ENCODE measurements at regions of chr20 and their contacts with region 1.

Region 1: GRCh38 chr20:62953839-62954703 is 1.6 kb downstream of the SLC17A9 start:
- DNase-seq: peak; percentile 49 to 84 (median 74)
- ATAC-seq: peak; percentile 91
- H3K4me3 ChIP-seq: peak overlapping the region; percentile 65
- H3K4me3 Mint-ChIP-seq: peak overlapping the region; percentile 81 to 91 (median 84)
- H3K27ac ChIP-seq: peak overlapping the region; percentile 66
- H3K27ac Mint-ChIP-seq: peak overlapping the region; percentile 89 to 98 (median 93)
- H3K4me1 ChIP-seq: peaks cover 13 to 32% of the 10 kb centered on the region in 2 donors
- H3K4me1 Mint-ChIP-seq: peaks cover 11 to 47% (median 28%) of the 10 kb centered on the region in 7 donors
- H3K27me3 ChIP-seq: no peaks in the 10 kb centered on the region
- H3K27me3 Mint-ChIP-seq: no peaks in the 10 kb centered on the region

Region 2: DNA sequence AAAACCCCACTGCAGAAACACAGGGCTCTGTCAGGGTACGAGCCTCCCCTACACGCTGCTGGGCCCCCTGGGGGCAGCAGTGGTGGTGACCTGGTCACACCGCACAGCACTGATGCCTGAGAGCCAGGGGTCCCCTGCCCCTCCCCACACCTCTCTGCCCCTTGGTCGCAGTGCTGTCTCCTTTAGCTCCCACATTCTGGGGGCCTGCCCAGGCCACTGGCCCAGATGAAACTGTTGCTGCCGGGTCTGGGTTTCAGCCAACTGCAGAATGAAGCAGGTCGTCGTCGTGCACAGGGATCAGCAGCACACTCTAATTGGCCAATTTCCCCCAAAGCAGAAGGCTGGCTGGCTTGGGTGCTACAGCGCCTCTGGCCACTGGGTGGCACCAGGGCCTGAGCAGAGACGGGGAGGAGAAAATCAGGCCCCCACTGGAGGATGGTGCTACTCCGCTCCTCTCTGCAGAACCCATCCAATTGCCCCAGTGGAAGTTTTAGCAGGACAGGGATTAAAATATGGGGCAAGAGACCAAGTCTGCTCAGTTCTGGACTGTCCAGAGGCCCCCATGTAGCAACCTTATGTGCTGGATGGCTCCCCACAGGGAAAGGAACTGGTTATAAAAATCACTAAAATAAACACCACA is 53.9 kb before region 1 on chr20:
- CTCF ChIA-PET with region 1: interaction called, 4 read pairs
- POLR2A ChIA-PET with region 1: interaction called, 9 read pairs
- intact Hi-C with region 1: loop called in 1 of 2 experiments (anchors 1 kb)
- DNase-seq: peak; percentile 60 to 82 (median 78)
- ATAC-seq: peak; percentile 97
- H3K4me3 ChIP-seq: no peak overlapping the region
- H3K4me3 Mint-ChIP-seq: peak overlapping the region; percentile 54 to 81 (median 69)
- H3K27ac ChIP-seq: peak overlapping the region; percentile 60
- H3K27ac Mint-ChIP-seq: peak overlapping the region; percentile 75 to 95 (median 90)
- H3K4me1 ChIP-seq: peaks cover 13 to 22% of the 10 kb centered on the region in 2 donors
- H3K4me1 Mint-ChIP-seq: peaks cover 23 to 42% (median 34%) of the 10 kb centered on the region in 7 donors
- H3K27me3 ChIP-seq: no peaks in the 10 kb centered on the region
- H3K27me3 Mint-ChIP-seq: no peaks in the 10 kb centered on the region

Region 3: GRCh38 chr20:62914970-62915457 is 39.1 kb before region 1 on chr20:
- CTCF ChIA-PET with region 1: interaction called, 5 read pairs
- POLR2A ChIA-PET with region 1: interaction called, 12 read pairs
- intact Hi-C with region 1: loop called in 1 of 2 experiments (anchors 5 kb)
- DNase-seq: peak in 3 of 9 donors; percentile 32 to 41 (median 37)
- ATAC-seq: peak; percentile 48
- H3K4me3 ChIP-seq: no peak overlapping the region
- H3K4me3 Mint-ChIP-seq: peak overlapping the region; percentile 15 to 90 (median 72)
- H3K27ac ChIP-seq: peak overlapping the region; percentile 57
- H3K27ac Mint-ChIP-seq: peak overlapping the region; percentile 51 to 91 (median 82)
- H3K4me1 ChIP-seq: peaks cover 53 to 55% of the 10 kb centered on the region in 2 donors
- H3K4me1 Mint-ChIP-seq: peaks cover 54 to 90% (median 82%) of the 10 kb centered on the region in 7 donors
- H3K27me3 ChIP-seq: no peaks in the 10 kb centered on the region
- H3K27me3 Mint-ChIP-seq: no peaks in the 10 kb centered on the region

Region 4: GRCh38 chr20:62926239-62927104 is 27.6 kb before region 1 on chr20 and contains the start of gene DIDO1:
- CTCF ChIA-PET with region 1: interaction called, 3 read pairs
- POLR2A ChIA-PET with region 1: interaction called, 30 read pairs
- intact Hi-C with region 1: loop called in 1 of 2 experiments (anchors 1 kb)
- DNase-seq: peak; percentile 81 to 93 (median 89)
- ATAC-seq: peak; percentile 92
- H3K4me3 ChIP-seq: peak within 1 kb of the TSS; percentile 84
- H3K4me3 Mint-ChIP-seq: peak within 1 kb of the TSS; percentile 94 to 99 (median 96)
- H3K27ac ChIP-seq: peak within 1 kb of the TSS; percentile 95
- H3K27ac Mint-ChIP-seq: peak within 1 kb of the TSS; percentile 90 to 96 (median 94)
- H3K4me1 ChIP-seq: peaks cover 53 to 57% of the 10 kb centered on the region in 2 donors
- H3K4me1 Mint-ChIP-seq: peaks cover 48 to 74% (median 69%) of the 10 kb centered on the region in 7 donors
- H3K27me3 ChIP-seq: no peaks in the 10 kb centered on the region
- H3K27me3 Mint-ChIP-seq: no peaks in the 10 kb centered on the region
- total RNA-seq, gene DIDO1: 66.1 to 139 (median 77.4) TPM

Region 5: DNA sequence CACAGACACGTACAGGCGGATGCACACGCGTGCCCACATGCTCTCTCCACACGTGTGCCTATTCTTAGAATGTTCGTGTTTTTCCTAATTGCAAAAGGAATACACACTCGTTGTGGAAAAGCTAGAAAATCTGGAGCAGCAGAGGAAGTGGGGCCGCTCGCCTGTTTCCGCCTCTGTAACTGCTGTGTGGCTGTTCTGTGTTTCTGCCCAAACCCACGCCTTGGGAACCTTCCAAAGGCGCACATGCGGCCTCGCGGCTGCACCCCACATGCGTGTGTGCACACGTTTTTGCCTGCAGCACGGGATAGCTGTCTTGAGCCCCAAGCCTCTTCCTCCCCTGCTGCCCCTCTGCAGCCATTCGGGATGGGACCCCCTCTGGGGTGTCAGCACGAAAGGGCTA is 10.6 kb after region 1 on chr20:
- CTCF ChIA-PET with region 1: interaction called, 11 read pairs
- POLR2A ChIA-PET with region 1: interaction called, 11 read pairs
- intact Hi-C with region 1: no loop called
- DNase-seq: no peak
- ATAC-seq: no peak
- H3K4me3 ChIP-seq: no peak overlapping the region
- H3K4me3 Mint-ChIP-seq: no peak overlapping the region
- H3K27ac ChIP-seq: no peak overlapping the region
- H3K27ac Mint-ChIP-seq: no peak overlapping the region
- H3K4me1 ChIP-seq: no peaks in the 10 kb centered on the region
- H3K4me1 Mint-ChIP-seq: peaks cover 0 to 8% (median 4%) of the 10 kb centered on the region in 7 donors
- H3K27me3 ChIP-seq: no peaks in the 10 kb centered on the region
- H3K27me3 Mint-ChIP-seq: no peaks in the 10 kb centered on the region

Region 6: GRCh38 chr20:63009045-63009961 is 55.2 kb after region 1 on chr20:
- CTCF ChIA-PET with region 1: interaction called, 3 read pairs
- POLR2A ChIA-PET with region 1: interaction called, 4 read pairs
- intact Hi-C with region 1: loop called in 1 of 2 experiments (anchors 1 kb)
- DNase-seq: peak; percentile 65 to 91 (median 80)
- ATAC-seq: peak; percentile 82
- H3K4me3 ChIP-seq: peak overlapping the region; percentile 54
- H3K4me3 Mint-ChIP-seq: peak overlapping the region; percentile 59 to 98 (median 86)
- H3K27ac ChIP-seq: no peak overlapping the region
- H3K27ac Mint-ChIP-seq: peak overlapping the region in 4 of 9 donors; percentile 21 to 95 (median 79)
- H3K4me1 ChIP-seq: peaks cover 11 to 37% of the 10 kb centered on the region in 2 donors
- H3K4me1 Mint-ChIP-seq: peaks cover 4 to 33% (median 21%) of the 10 kb centered on the region in 7 donors
- H3K27me3 ChIP-seq: peaks cover 19% of the 10 kb centered on the region in 2 donors
- H3K27me3 Mint-ChIP-seq: peaks cover 19 to 78% (median 39%) of the 10 kb centered on the region in 5 donors

Measured in naive thymus-derived CD4-positive, alpha-beta T cell (primary cell).